ENCODE measurements at regions of chr13 and their contacts with region 1.

Region 1: GRCh38 chr13:41310963-41311606 is at the start of gene NAA16:
- DNase-seq: peak; percentile 90
- ATAC-seq: peak; percentile 85
- H3K4me3 ChIP-seq: peak within 1 kb of the TSS; percentile 87
- H3K27ac ChIP-seq: peak within 1 kb of the TSS; percentile 91
- H3K4me1 ChIP-seq: peaks cover 12% of the 10 kb centered on the region
- H3K27me3 ChIP-seq: no peaks in the 10 kb centered on the region
- CTCF ChIP-seq: no peak
- POLR2A ChIP-seq: no peak
- RAD21 ChIP-seq: no peak
- total RNA-seq, gene NAA16: 6.6 and 13.1 TPM in 2 replicates

Region 2: GRCh38 chr13:41061075-41061913 is 249.8 kb before region 1 on chr13 and contains the start of gene WBP4:
- CTCF ChIA-PET with region 1: no interaction called
- POLR2A ChIA-PET with region 1: no interaction called
- dilution Hi-C with region 1: no loop called
- in situ Hi-C with region 1: no loop called
- intact Hi-C with region 1: loop called (anchors 5 kb)
- DNase-seq: peak; percentile 95
- ATAC-seq: peak; percentile 70
- H3K4me3 ChIP-seq: peak within 1 kb of the TSS; percentile 82
- H3K27ac ChIP-seq: peak within 1 kb of the TSS; percentile 93
- H3K4me1 ChIP-seq: peaks cover 6% of the 10 kb centered on the region
- H3K27me3 ChIP-seq: no peaks in the 10 kb centered on the region
- CTCF ChIP-seq: peak; percentile 20; the same call in 1 of the 2 replicates
- POLR2A ChIP-seq: peak; percentile 68; the same call in 1 of the 2 replicates
- RAD21 ChIP-seq: no peak; the same call in 1 of the 2 replicates
- total RNA-seq, gene WBP4: 4.3 and 11.4 TPM in 2 replicates

Region 3: GRCh38 chr13:41075034-41075433 is 236.1 kb before region 1 on chr13:
- CTCF ChIA-PET with region 1: no interaction called
- POLR2A ChIA-PET with region 1: no interaction called
- dilution Hi-C with region 1: no loop called
- in situ Hi-C with region 1: loop called (anchors 25 kb)
- intact Hi-C with region 1: loop called (anchors 2 kb)
- DNase-seq: peak; percentile 49
- ATAC-seq: peak; percentile 59
- H3K4me3 ChIP-seq: no peak overlapping the region
- H3K27ac ChIP-seq: no peak overlapping the region
- H3K4me1 ChIP-seq: no peaks in the 10 kb centered on the region
- H3K27me3 ChIP-seq: no peaks in the 10 kb centered on the region
- CTCF ChIP-seq: peak; percentile 76
- POLR2A ChIP-seq: no peak
- RAD21 ChIP-seq: peak; percentile 83

Region 4: GRCh38 chr13:41132512-41133152 is 178.5 kb before region 1 on chr13 and contains the start of gene KBTBD6:
- CTCF ChIA-PET with region 1: no interaction called
- POLR2A ChIA-PET with region 1: no interaction called
- dilution Hi-C with region 1: no loop called
- in situ Hi-C with region 1: no loop called
- intact Hi-C with region 1: loop called (anchors 2 kb)
- DNase-seq: peak; percentile 99
- ATAC-seq: peak; percentile 98
- H3K4me3 ChIP-seq: peak within 1 kb of the TSS; percentile 54
- H3K27ac ChIP-seq: peak within 1 kb of the TSS; percentile 77
- H3K4me1 ChIP-seq: peaks cover 13% of the 10 kb centered on the region
- H3K27me3 ChIP-seq: no peaks in the 10 kb centered on the region
- CTCF ChIP-seq: no peak
- POLR2A ChIP-seq: peak; percentile 26; the same call in 1 of the 2 replicates
- RAD21 ChIP-seq: no peak
- total RNA-seq, gene KBTBD6: 14.7 and 18.3 TPM in 2 replicates

Region 5: GRCh38 chr13:41327994-41328790 is 17.1 kb after region 1 on chr13:
- CTCF ChIA-PET with region 1: no interaction called
- POLR2A ChIA-PET with region 1: no interaction called
- dilution Hi-C with region 1: no loop called
- in situ Hi-C with region 1: no loop called
- intact Hi-C with region 1: no loop called
- DNase-seq: no peak
- ATAC-seq: no peak; the same call in 1 of the 2 replicates
- H3K4me3 ChIP-seq: no peak overlapping the region
- H3K27ac ChIP-seq: no peak overlapping the region
- H3K4me1 ChIP-seq: no peaks in the 10 kb centered on the region
- H3K27me3 ChIP-seq: no peaks in the 10 kb centered on the region
- CTCF ChIP-seq: no peak
- POLR2A ChIP-seq: no peak
- RAD21 ChIP-seq: no peak